ENCODE measurements at regions of chr11 and their contacts with region 1.

Region 1: GRCh38 chr11:82733444-82734119 is at the start of gene FAM181B:
- DNase-seq: peak; percentile 80
- ATAC-seq: peak; percentile 87
- total RNA-seq, gene FAM181B: 3.7 TPM

Region 2: GRCh38 chr11:82864268-82864667 is 130.7 kb after region 1 on chr11:
- intact Hi-C with region 1: loop called (anchors 5 kb)
- DNase-seq: peak; percentile 69
- ATAC-seq: peak; percentile 95

Measured in sciatic nerve (tissue), 2 donors.